T-cell (primary cell): ENCODE measurements at regions of chr4 and their contacts with region 1.

Region 1: DNA sequence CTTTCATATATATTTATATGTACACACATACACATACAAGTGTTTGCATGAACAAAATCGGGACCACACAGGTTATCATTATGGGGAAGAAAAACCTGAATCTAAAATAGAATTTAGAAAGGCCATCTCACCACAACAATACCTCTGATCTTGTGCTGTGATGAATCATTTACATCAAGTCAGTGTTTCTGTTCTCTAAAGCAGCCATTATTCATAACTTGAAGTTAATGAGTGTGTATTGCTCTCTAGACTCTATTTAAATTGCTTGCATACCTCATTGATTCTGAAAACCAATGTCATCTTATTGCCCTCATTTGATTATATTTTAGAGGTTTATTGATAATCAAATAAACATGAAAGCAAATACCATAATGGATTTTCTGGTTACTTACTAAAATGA is 71.6 kb downstream of the FAM114A1 start:
- DNase-seq: no peak
- ATAC-seq: no peak
- H3K4me3 ChIP-seq: no peak overlapping the region
- H3K4me3 Mint-ChIP-seq: no peak overlapping the region
- H3K27ac ChIP-seq: no peak overlapping the region
- H3K27ac Mint-ChIP-seq: no peak overlapping the region
- H3K4me1 ChIP-seq: no peaks in the 10 kb centered on the region
- H3K4me1 Mint-ChIP-seq: peaks cover 0 to 2% (median 0%) of the 10 kb centered on the region in 3 donors
- H3K27me3 ChIP-seq: no peaks in the 10 kb centered on the region
- H3K27me3 Mint-ChIP-seq: no peaks in the 10 kb centered on the region

Region 2: GRCh38 chr4:39044364-39044955 is 105.3 kb after region 1 on chr4:
- CTCF ChIA-PET with region 1: no interaction called
- POLR2A ChIA-PET with region 1: no interaction called
- DNase-seq: peak; percentile 79 to 98 (median 95)
- ATAC-seq: peak; percentile 80 to 85 (median 80)
- H3K4me3 ChIP-seq: peak overlapping the region; percentile 52 to 66
- H3K4me3 Mint-ChIP-seq: peak overlapping the region; percentile 85 to 90 (median 85)
- H3K27ac ChIP-seq: peak overlapping the region; percentile 82
- H3K27ac Mint-ChIP-seq: peak overlapping the region; percentile 58 to 92
- H3K4me1 ChIP-seq: peaks cover 19 to 33% of the 10 kb centered on the region in 2 experiments
- H3K4me1 Mint-ChIP-seq: peaks cover 47 to 55% (median 53%) of the 10 kb centered on the region in 3 donors
- H3K27me3 ChIP-seq: no peaks in the 10 kb centered on the region
- H3K27me3 Mint-ChIP-seq: no peaks in the 10 kb centered on the region

Region 3: DNA sequence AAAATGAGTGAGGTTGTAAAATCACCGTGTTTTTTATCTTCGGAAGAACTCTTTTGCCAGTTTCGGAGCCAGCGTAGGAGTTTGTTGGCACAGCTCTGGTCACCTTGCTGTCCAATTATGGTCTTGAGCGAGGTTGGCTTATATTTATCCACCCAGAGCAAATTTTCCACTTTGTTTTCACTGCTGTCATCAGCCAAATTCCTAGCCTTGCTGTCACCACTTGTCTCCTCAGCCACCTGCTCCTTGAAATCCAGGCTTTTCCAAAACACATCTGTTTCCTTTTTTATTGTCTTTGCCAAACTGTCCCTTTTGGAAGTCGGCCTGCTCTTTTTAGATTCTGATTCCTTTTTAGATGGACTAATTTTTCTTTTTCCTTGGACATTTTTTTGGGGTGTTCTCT is 369.4 kb after region 1 on chr4:
- CTCF ChIA-PET with region 1: no interaction called
- POLR2A ChIA-PET with region 1: interaction called in 1 of 2 experiments, 11 read pairs
- DNase-seq: no peak
- ATAC-seq: no peak
- H3K4me3 ChIP-seq: no peak overlapping the region
- H3K4me3 Mint-ChIP-seq: no peak overlapping the region
- H3K27ac ChIP-seq: no peak overlapping the region
- H3K27ac Mint-ChIP-seq: no peak overlapping the region
- H3K4me1 ChIP-seq: no peaks in the 10 kb centered on the region
- H3K4me1 Mint-ChIP-seq: peaks cover 0 to 8% (median 0%) of the 10 kb centered on the region in 3 donors
- H3K27me3 ChIP-seq: no peaks in the 10 kb centered on the region
- H3K27me3 Mint-ChIP-seq: no peaks in the 10 kb centered on the region

Region 4: GRCh38 chr4:39928538-39928937 is 989.4 kb after region 1 on chr4:
- CTCF ChIA-PET with region 1: interaction called in 1 of 2 experiments, 10 read pairs
- POLR2A ChIA-PET with region 1: no interaction called
- DNase-seq: no peak
- ATAC-seq: no peak
- H3K4me3 ChIP-seq: no peak overlapping the region
- H3K4me3 Mint-ChIP-seq: no peak overlapping the region
- H3K27ac ChIP-seq: no peak overlapping the region
- H3K27ac Mint-ChIP-seq: no peak overlapping the region
- H3K4me1 ChIP-seq: peaks cover 0 to 30% of the 10 kb centered on the region in 2 experiments
- H3K4me1 Mint-ChIP-seq: peaks cover 32 to 49% (median 36%) of the 10 kb centered on the region in 3 donors
- H3K27me3 ChIP-seq: no peaks in the 10 kb centered on the region
- H3K27me3 Mint-ChIP-seq: no peaks in the 10 kb centered on the region